A549 (cell line): ENCODE measurements at regions of chr5 and their contacts with region 1.

Region 1: DNA sequence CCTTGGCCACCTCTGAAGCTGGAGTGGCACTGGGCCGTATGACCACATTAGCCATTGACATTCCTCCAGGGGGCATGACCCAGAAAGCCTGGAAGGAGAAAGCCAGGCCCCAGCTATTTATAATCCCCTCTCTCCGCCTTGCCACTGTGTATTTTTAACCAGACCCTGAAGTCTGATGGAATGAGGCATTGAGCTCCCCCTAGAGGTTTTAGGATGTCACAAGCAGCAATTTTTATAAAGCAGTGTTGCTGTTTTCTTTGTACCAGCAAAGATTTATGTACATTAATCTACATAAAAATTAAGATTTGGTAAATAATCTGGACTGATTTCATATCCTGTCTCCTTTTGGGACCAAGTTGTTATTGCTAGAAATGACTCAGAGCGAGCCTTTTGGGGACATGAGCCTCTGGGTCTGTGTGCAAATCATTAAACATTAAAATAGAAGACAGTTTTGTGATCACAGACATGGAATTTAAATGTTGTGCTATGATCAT is 127.1 kb downstream of the TRIO start:
- DNase-seq: peak; percentile 74 to 76
- ATAC-seq: peak; percentile 65 to 66
- H3K4me3 ChIP-seq: no peak overlapping the region
- H3K27ac ChIP-seq: peak overlapping the region; percentile 66 to 84
- H3K4me1 ChIP-seq: peaks cover 83% of the 10 kb centered on the region
- CTCF ChIP-seq: peak; percentile 88
- EP300 ChIP-seq: no peak
- POLR2A ChIP-seq: no peak
- RAD21 ChIP-seq: peak; percentile 87 to 89

Region 2: DNA sequence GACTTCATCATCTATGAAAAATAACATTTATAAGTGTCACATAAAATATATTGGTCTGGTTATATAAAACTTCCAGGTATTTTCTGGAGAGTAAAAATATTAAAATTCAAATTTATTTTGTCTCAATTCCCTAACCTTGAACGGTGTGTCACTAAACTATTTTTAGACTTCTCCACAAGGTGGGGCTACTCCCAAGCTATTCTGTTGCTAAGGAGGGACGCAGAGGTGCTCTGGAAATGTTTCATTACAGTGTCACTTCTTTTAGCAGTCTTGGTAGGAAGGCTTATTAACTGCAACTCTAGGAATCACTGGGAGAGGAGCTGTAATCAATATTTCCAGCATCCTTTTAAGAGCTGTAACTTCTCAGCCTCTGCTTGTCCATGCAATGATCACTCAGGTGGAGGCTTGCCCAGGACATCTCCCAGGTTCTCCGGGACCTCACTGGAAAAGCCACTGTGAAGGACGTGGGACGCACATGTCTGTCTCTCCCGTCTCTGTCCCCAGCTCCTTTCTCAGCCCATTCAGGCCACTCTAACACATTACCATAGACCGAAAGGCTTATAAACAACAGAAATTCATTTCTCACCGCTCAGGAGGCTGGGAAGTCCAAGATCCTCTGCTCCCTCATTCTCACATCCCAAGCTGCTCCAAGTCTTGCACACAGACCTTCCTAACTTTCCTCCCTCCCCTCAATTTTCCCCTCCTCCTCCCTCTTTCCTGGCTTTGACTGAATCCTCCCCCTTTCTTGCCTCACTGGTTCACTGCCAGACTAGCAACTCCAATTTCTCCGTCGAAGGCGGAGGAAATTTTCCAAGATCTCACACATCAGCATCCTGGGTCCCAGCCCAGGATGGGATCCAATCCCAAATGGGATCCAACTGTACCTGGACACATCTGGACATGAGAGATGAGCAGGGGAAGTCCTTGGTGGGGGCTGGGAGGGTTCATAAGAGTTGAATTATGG is 293.1 kb before region 1 on chr5:
- CTCF ChIA-PET with region 1: interaction called, 13 read pairs
- POLR2A ChIA-PET with region 1: no interaction called
- DNase-seq: peak; percentile 49 to 79
- ATAC-seq: peak; percentile 87 to 96
- H3K4me3 ChIP-seq: no peak overlapping the region
- H3K27ac ChIP-seq: no peak overlapping the region; a peak in 1 of 6 replicates
- H3K4me1 ChIP-seq: 0 out of 3 replicates have a peak, but pooled peaks cover 3% of the 10 kb centered on the region
- CTCF ChIP-seq: peak; percentile 81
- EP300 ChIP-seq: no peak
- POLR2A ChIP-seq: no peak
- RAD21 ChIP-seq: peak; percentile 84 to 94

Region 3: DNA sequence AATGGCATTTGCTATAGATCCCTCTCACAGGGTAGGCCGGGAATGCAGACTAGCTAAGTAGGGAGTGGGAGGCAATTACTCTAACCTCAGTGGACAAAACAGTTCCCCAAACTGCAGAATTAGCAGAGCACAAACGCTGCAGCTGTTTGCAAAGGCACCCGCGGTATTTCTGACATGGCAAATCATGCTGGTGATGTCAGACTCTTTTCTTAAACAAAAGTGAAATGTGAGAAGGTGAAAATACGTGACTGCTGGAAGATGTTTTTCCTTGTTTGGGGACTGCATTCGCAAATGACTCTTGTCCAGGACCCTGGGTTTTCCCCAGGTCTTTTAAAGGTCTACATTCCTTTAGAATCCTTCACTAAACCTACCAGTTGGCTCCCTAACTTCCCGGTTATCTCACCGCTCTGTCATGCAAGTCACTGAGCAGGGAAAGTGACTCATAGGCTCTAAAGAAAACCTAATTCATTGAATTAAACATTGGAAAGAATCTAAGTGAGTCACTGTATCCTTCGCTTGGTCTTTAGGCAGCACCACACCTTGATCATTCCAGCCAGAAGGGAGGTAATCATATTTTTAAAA is 234.3 kb before region 1 on chr5:
- CTCF ChIA-PET with region 1: interaction called, 11 read pairs
- POLR2A ChIA-PET with region 1: no interaction called
- DNase-seq: peak; percentile 95 to 97
- ATAC-seq: peak; percentile 84 to 85
- H3K4me3 ChIP-seq: peak overlapping the region; percentile 23
- H3K27ac ChIP-seq: peak overlapping the region; percentile 84 to 91
- H3K4me1 ChIP-seq: peaks cover 60% of the 10 kb centered on the region
- CTCF ChIP-seq: no peak
- EP300 ChIP-seq: peak; percentile 74 to 90; a peak in 4 of 5 replicates
- POLR2A ChIP-seq: no peak
- RAD21 ChIP-seq: peak; percentile 2 to 27; a peak in 2 of 5 replicates

Region 4: GRCh38 chr5:14156650-14157493 is 113.4 kb before region 1 on chr5:
- CTCF ChIA-PET with region 1: interaction called, 23 read pairs
- POLR2A ChIA-PET with region 1: no interaction called
- DNase-seq: peak; percentile 70 to 77
- ATAC-seq: peak; percentile 81 to 85
- H3K4me3 ChIP-seq: peak overlapping the region; percentile 30
- H3K27ac ChIP-seq: peak overlapping the region; percentile 61 to 82
- H3K4me1 ChIP-seq: peaks cover 93% of the 10 kb centered on the region
- CTCF ChIP-seq: no peak
- EP300 ChIP-seq: no peak
- POLR2A ChIP-seq: no peak
- RAD21 ChIP-seq: no peak

Region 5: GRCh38 chr5:14204785-14205321 is 65.4 kb before region 1 on chr5:
- CTCF ChIA-PET with region 1: interaction called, 28 read pairs
- POLR2A ChIA-PET with region 1: interaction called, 3 read pairs
- DNase-seq: peak; percentile 49 to 90
- ATAC-seq: peak; percentile 78 to 81
- H3K4me3 ChIP-seq: peak overlapping the region; percentile 23; the same call in 2 of the 3 replicates
- H3K27ac ChIP-seq: peak overlapping the region; percentile 87 to 92
- H3K4me1 ChIP-seq: peaks cover 91% of the 10 kb centered on the region
- CTCF ChIP-seq: no peak
- EP300 ChIP-seq: peak; percentile 16 to 60; a peak in 2 of 5 replicates
- POLR2A ChIP-seq: no peak
- RAD21 ChIP-seq: peak; percentile 25 to 42

Region 6: GRCh38 chr5:14286574-14287421 is 16.5 kb after region 1 on chr5:
- CTCF ChIA-PET with region 1: interaction called, 12 read pairs
- POLR2A ChIA-PET with region 1: no interaction called
- DNase-seq: no peak
- ATAC-seq: peak in 1 of 2 experiments; percentile 28; a peak in 1 of 6 replicates
- H3K4me3 ChIP-seq: no peak overlapping the region
- H3K27ac ChIP-seq: no peak overlapping the region
- H3K4me1 ChIP-seq: no peaks in the 10 kb centered on the region
- CTCF ChIP-seq: no peak
- EP300 ChIP-seq: no peak
- POLR2A ChIP-seq: no peak
- RAD21 ChIP-seq: no peak

Region 7: DNA sequence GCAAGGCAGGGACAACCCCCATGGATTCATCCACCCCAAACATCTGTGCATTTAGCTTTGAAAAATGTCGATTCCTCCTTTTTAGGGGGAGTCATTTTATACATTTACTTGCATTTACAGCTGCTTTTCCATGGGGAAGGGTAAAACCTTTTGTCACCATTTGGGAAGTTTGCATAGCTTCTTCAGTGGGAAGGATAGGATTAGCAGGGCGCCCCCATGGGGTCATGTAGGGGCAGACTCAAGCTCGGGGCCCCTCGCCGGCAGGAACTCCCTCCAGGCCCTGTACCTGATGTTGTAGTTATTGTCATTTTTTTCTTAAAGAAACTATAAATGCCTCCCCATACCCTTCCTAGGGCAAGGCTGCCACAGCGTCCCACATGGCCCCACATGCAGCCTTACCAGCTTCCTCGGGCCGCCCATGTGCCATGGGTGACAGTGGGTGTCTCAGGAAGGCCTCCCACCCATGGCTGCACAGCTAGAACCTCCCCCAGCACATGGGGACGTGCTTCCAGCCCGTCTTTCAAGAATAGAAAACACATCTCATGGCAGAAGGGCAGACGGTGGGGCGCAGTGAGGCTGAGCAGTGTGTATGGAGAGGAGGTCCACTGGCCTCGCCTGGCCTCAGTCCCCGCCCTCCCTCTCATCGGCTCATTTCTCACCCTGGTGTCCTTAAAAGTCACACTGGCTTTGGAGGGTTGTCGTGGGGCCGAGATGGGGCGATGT is 235.2 kb after region 1 on chr5:
- CTCF ChIA-PET with region 1: no interaction called
- POLR2A ChIA-PET with region 1: no interaction called
- DNase-seq: no peak
- ATAC-seq: no peak; a peak in 1 of 6 replicates
- H3K4me3 ChIP-seq: no peak overlapping the region
- H3K27ac ChIP-seq: no peak overlapping the region
- H3K4me1 ChIP-seq: no peaks in the 10 kb centered on the region
- CTCF ChIP-seq: no peak
- EP300 ChIP-seq: no peak
- POLR2A ChIP-seq: no peak
- RAD21 ChIP-seq: no peak